ENCODE measurements at regions of chr3 and their contacts with region 1.

Region 1: GRCh38 chr3:58059349-58060321 is 51.4 kb downstream of the FLNB start:
- DNase-seq: peak; percentile 76 to 91
- H3K4me3 ChIP-seq: peak overlapping the region in 1 of 2 donors; percentile 1
- H3K27ac ChIP-seq: peak overlapping the region; percentile 86 to 89
- H3K4me1 ChIP-seq: peaks cover 12 to 23% of the 10 kb centered on the region in 2 donors
- H3K27me3 ChIP-seq: no peaks in the 10 kb centered on the region
- CTCF ChIP-seq: no peak
- POLR2A ChIP-seq: peak in 1 of 2 donors; percentile 36

Region 2: DNA sequence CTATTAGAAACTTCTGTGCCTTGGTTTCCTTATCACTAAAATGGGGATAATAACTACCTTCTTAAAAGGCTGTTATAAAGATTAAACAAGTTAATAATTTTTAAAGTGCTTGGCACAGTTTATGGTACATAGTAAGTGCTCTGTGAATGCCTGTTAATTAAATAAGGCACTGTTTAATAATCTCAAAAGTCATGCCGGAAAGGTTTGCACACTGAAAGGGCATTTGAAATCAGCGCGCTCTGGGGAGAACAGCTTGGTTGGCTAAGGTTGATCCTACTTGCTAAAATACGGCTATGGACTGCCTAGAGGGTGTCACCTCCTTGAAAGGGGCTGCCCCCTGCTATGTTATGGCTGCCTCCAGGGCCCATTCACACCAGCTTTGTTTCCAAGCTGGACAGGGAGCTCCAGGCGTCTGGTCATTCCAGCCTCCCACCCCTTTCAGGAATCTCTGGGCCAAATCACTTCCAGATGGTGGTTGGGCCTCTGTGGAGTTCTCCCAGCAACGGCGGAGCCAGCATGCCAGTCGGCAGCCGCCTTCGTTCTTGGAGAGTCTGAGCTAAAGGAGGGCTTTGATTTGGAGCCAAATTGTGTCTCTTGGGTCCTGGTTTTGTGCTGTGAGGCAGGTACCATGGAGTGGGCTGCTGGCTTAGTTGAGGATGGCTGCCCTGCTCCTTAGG is 45.5 kb before region 1 on chr3:
- intact Hi-C with region 1: loop called (anchors 5 kb)
- DNase-seq: peak; percentile 74 to 86
- H3K4me3 ChIP-seq: no peak overlapping the region
- H3K27ac ChIP-seq: peak overlapping the region; percentile 83 to 90
- H3K4me1 ChIP-seq: peaks cover 0 to 2% of the 10 kb centered on the region in 2 donors
- H3K27me3 ChIP-seq: no peaks in the 10 kb centered on the region
- CTCF ChIP-seq: no peak
- POLR2A ChIP-seq: peak in 1 of 2 donors; percentile 36

Measured in uterus (tissue), 4 donors.